SK-MEL-5 (cell line): ENCODE measurements at regions of chr13 and their contacts with region 1.

Region 1: GRCh38 chr13:97109841-97110492 is 112.2 kb upstream of the MBNL2 start:
- DNase-seq: peak; percentile 78

Region 2: GRCh38 chr13:97179506-97179905 is 69.5 kb after region 1 on chr13:
- in situ Hi-C with region 1: no loop called
- DNase-seq: no peak

Region 3: DNA sequence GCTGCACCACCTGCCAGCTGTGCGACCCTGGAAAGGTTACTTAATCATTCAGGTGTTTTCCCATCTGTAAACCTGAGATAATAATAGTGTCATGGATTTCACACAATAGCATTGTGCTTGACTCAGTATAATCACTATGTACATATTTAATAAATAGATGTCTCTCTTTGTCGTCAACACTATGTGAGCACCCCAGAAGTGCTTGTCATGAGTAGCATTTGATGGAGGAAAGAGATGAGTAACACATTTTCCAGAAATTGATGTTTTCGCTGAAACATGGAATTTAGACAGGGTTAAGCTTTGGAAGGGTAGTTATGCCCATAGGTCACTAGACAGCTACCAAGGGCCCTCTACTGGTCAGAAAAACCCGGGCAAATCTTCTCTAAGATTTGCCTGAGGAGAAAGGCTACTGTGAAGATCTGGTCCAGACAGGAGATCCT is 102.7 kb after region 1 on chr13:
- in situ Hi-C with region 1: loop called (anchors 10 kb)
- DNase-seq: peak; percentile 77

Region 4: GRCh38 chr13:97359181-97360057 is 249.5 kb after region 1 on chr13:
- in situ Hi-C with region 1: loop called (anchors 10 kb)
- DNase-seq: peak; percentile 88